Kidney (tissue), 22 donors: ENCODE measurements at regions of chr15 and their contacts with region 1.

Region 1: DNA sequence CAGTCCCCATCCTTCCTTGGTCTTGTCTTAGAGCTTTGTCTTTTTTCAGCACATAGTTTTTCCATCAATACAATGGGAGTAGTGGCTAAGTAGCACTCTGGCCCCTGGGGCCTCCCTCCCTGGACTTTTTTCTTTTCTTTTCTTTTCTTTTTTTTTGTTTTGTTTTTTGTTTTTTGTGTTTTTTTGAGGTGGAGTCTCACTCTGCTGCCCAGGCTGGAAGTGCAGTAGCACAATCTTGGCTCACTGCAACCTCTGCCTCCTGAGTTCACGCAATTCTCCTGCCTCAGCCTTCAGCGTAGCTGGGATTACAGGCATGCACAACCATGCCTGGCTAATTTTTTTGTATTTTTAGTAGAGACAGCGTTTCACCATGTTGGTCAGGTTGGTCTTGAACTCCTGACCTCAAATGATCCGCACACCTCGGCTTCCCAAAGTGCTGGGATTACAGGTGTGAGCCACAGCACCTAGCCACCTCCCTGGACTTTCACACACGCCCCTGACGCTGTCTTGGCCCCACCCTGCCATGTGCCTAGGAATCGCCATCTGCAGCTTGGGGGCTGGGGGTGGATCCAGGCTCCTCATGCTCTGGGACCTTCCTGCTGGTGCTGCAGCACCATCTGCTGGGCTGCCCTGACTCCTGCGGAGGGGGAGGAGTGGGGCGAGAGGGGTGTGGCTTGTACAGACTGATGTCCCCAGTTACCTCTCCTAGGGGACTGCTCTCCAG is 2.8 kb downstream of the C15orf39 start:
- DNase-seq: peak; percentile 90 to 97 (median 93)
- H3K4me3 ChIP-seq: peak overlapping the region in 1 of 3 donors; percentile 77
- H3K27ac ChIP-seq: no peak overlapping the region
- H3K4me1 ChIP-seq: peaks cover 0 to 30% (median 11%) of the 10 kb centered on the region in 3 donors
- H3K27me3 ChIP-seq: no peaks in the 10 kb centered on the region
- CTCF ChIP-seq: peak; percentile 98

Region 2: GRCh38 chr15:75029378-75030022 is 175.0 kb before region 1 on chr15:
- intact Hi-C with region 1: loop called (anchors 5 kb)
- DNase-seq: peak; percentile 84 to 96 (median 92)
- H3K4me3 ChIP-seq: no peak overlapping the region
- H3K27ac ChIP-seq: peak overlapping the region; percentile 68 to 71
- H3K4me1 ChIP-seq: peaks cover 0 to 24% (median 7%) of the 10 kb centered on the region in 3 donors
- H3K27me3 ChIP-seq: no peaks in the 10 kb centered on the region
- CTCF ChIP-seq: peak; percentile 98